ENCODE measurements at regions of chr7 and their contacts with region 1.

Region 1: GRCh38 chr7:71237945-71238344 is 106.0 kb downstream of the GALNT17 start:
- DNase-seq: peak; percentile 17 to 46
- ATAC-seq: peak; percentile 65 to 94 (median 86)
- H3K4me3 ChIP-seq: no peak overlapping the region
- H3K27ac ChIP-seq: peak overlapping the region in 9 of 10 donors; percentile 47 to 90 (median 85)
- H3K4me1 ChIP-seq: peaks cover 0 to 41% (median 27%) of the 10 kb centered on the region in 9 donors
- H3K27me3 ChIP-seq: no peaks in the 10 kb centered on the region
- CTCF ChIP-seq: peak in 8 of 9 donors; percentile 8 to 57 (median 26)

Region 2: DNA sequence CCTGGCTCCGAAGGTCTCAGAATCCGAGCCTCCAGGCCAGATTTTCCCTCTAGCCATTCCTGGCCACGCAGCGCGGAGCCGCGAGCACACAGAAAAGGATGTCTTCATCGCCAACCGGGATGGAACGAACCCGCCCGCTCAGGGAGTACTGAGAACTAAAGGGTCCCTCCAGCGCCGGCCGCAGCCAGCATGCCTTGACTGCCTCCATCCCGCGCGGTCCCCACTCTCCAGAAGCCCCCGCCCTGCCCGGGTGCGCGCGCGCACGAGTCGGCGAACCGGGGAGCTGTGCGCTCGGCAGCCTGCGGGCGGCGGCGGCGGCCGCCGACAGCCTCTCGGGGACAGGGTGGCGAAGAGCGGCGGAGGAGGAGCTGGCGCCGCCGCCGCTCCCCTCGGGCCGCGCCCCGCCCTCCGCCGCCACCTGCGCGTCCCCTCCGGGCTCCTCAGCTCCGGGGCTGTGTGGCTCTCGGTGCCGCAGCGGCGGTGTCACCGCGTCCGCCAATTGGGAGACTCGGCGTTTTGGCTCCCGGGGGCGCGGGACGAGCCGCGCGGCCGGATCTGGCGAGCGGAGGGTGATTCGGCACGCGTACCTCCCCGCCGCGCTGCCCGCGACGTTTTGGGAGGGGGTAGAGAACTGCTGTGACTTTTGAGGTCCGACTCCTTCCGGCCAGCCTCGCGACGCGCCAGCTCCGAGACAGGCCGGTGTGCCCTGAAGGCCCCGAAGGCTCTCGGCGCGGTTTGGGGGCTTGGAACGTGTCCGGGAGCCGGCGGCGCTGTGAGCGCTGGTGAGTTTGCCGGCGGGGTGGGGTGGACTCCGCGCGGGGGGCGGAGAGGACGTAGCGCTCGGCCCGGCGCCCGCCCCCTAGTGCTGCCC is 106.5 kb before region 1 on chr7:
- intact Hi-C with region 1: loop called in 2 of 10 experiments (anchors 10 kb)
- DNase-seq: peak; percentile 27 to 56
- ATAC-seq: peak; percentile 78 to 92 (median 84)
- H3K4me3 ChIP-seq: peak overlapping the region; percentile 52 to 70 (median 60)
- H3K27ac ChIP-seq: peak overlapping the region; percentile 40 to 91 (median 82)
- H3K4me1 ChIP-seq: peaks cover 0 to 9% (median 0%) of the 10 kb centered on the region in 9 donors
- H3K27me3 ChIP-seq: peaks cover 6 to 40% (median 31%) of the 10 kb centered on the region in 7 donors
- CTCF ChIP-seq: peak in 4 of 9 donors; percentile 14 to 47 (median 39)

Region 3: DNA sequence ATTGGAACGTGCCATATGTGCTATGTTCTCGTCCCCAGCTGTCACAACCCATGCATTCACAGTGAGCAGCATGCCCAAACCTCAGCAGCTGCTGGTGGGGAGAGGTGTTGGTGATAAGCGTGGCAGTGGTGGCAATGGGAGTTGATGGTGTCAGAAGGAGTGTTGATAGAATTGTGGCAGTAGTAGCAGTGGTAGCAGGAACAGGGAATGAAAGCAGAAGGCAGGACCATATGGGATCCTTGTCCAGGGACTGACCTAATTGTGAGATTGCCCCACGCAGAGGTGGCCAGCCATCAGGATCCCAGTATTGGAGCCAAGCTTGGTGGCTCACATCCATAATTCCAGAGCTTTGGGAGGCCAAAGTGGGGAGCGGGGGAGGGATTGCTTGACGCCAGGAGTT is 170.3 kb after region 1 on chr7:
- intact Hi-C with region 1: loop called in 3 of 10 experiments (anchors 5 to 10 kb)
- DNase-seq: peak; percentile 66 to 75
- ATAC-seq: peak; percentile 88 to 98 (median 95)
- H3K4me3 ChIP-seq: no peak overlapping the region
- H3K27ac ChIP-seq: peak overlapping the region in 5 of 10 donors; percentile 45 to 72 (median 57)
- H3K4me1 ChIP-seq: peaks cover 0 to 28% (median 10%) of the 10 kb centered on the region in 9 donors
- H3K27me3 ChIP-seq: no peaks in the 10 kb centered on the region
- CTCF ChIP-seq: no peak

Region 4: DNA sequence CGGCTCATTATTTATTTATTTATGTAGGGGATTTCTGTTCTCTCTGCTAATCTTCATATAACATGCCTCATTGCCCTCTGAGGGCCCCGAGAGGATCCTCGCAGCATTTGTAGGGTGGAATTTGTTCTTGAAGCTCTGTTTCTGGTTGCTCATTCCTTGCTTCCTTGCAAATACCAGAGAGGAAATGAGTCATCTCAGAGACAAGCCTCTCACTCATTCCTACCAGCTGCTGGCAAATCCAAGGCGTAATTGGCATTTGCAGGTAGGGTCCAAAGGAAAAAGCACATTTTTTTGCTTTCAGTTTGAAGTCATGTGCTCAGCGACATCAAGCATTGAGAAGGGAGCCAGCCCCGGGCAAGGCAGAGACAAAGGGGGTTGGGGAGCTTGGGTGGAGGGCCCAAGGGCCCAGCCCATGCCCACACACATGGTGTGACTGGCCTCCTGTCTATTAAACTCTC is 395.6 kb after region 1 on chr7:
- intact Hi-C with region 1: loop called in 1 of 10 experiments (anchors 10 kb)
- DNase-seq: no peak
- ATAC-seq: peak in 1 of 8 donors; percentile 17
- H3K4me3 ChIP-seq: no peak overlapping the region
- H3K27ac ChIP-seq: peak overlapping the region in 6 of 10 donors; percentile 32 to 71 (median 55)
- H3K4me1 ChIP-seq: peaks cover 0 to 32% (median 9%) of the 10 kb centered on the region in 9 donors
- H3K27me3 ChIP-seq: no peaks in the 10 kb centered on the region
- CTCF ChIP-seq: no peak

Region 5: GRCh38 chr7:71723859-71724258 is 485.9 kb after region 1 on chr7:
- intact Hi-C with region 1: loop called in 1 of 10 experiments (anchors 10 kb)
- DNase-seq: no peak
- ATAC-seq: peak in 5 of 8 donors; percentile 31 to 71 (median 48)
- H3K4me3 ChIP-seq: no peak overlapping the region
- H3K27ac ChIP-seq: no peak overlapping the region
- H3K4me1 ChIP-seq: peaks cover 0 to 3% (median 0%) of the 10 kb centered on the region in 9 donors
- H3K27me3 ChIP-seq: peaks cover 0 to 6% (median 0%) of the 10 kb centered on the region in 7 donors
- CTCF ChIP-seq: no peak